H1 (cell line): ENCODE measurements at regions of chr12 and their contacts with region 1.

Region 1: DNA sequence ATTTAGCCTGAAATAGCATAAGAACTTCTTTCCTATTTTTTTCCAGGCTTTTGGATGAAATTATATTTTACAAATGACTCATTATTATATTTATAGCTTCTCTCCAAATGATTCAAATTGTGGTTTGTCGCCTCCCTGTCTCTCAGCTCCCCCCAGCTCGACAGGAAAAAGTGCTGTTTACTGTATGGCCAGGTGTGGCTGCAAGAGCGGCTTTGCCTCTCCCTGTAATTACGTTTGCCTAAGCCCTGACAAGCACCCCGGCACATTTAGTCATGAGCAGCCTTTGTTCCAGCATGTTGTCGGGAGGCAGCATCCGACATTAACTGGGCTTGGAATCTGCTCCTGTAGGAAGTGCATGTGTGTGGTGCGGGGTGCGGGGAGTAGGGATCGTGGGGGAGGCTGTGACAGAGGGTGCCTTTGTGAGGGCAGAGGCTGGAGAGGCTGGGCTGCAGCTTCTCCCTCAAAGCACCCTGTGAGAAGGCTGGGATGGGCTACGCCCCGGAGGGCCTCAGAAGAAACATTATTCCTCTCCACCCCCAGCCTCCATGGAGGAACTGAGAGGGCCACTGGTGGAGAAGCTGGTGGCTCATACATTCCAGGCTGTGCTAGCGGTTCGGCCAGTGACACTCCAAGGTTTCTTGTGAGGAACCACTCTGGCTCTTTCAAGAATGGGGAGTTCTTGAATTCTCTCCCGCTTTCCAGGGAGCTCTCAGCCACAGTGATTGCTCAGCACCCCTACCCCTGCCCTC is 42.1 kb upstream of the CTDSP2 start:
- DNase-seq: no peak
- H3K4me3 ChIP-seq: peak overlapping the region in 3 of 4 experiments; percentile 4 to 23 (median 19); a peak in 3 of 8 replicates
- H3K27ac ChIP-seq: peak overlapping the region; percentile 4; the same call in 1 of the 2 replicates
- H3K4me1 ChIP-seq: peaks cover 2 to 22% (median 17%) of the 10 kb centered on the region in 4 experiments
- H3K27me3 ChIP-seq: no peaks in the 10 kb centered on the region; a peak in 1 of 7 replicates
- CTCF ChIP-seq: no peak
- EP300 ChIP-seq: no peak
- POLR2A ChIP-seq: peak in 1 of 2 experiments; percentile 59; a peak in 2 of 3 replicates
- RAD21 ChIP-seq: no peak

Region 2: DNA sequence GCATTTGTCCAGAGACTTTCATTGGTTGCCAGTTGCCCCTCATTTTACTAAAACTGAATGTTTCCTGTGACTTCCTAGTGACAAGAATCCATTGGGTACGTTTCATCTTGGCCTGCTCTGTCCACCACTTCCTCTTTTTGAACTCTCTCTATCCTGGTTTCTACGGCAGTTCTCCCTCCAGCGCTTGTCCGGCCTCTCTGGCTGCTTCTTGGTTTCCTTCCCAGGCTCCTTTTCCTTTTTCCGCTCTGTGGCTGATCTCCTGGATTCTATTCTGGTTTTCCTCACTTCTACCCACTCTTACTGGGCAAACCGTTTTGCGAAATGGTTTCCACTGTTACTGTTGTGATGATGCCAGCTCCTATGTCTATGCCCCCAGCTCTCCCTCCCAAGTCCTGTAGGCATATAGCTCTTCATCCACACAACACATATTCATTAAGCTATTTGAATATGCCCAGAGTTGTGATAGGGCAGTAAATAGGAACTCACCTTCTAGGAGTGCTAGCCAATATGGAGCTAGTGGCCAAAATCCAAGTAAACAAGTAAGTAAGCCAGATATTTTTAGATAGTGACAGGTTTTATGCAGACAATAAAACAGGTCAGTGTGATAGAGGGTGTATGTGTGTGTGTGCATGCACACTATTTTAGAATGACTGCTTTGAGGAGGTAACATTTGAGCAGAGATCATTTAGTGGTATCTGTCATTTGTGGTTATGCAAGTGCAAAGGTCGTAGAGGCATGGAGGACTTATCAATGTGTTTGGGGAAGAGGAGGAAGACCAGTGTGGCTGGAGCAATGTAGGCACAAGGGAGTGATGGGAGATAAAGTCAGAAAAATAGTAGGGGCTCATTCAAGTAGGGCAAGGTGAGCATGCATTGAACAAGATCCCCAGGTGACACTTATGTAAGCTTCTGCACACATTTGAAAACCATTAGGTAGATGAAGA is 14.1 kb before region 1 on chr12:
- CTCF ChIA-PET with region 1: interaction called, 26 read pairs
- POLR2A ChIA-PET with region 1: interaction called, 8 read pairs
- DNase-seq: no peak
- H3K4me3 ChIP-seq: no peak overlapping the region
- H3K27ac ChIP-seq: no peak overlapping the region
- H3K4me1 ChIP-seq: no peaks in the 10 kb centered on the region; a peak in 1 of 7 replicates
- H3K27me3 ChIP-seq: no peaks in the 10 kb centered on the region
- CTCF ChIP-seq: no peak
- EP300 ChIP-seq: no peak
- POLR2A ChIP-seq: no peak
- RAD21 ChIP-seq: no peak

Region 3: GRCh38 chr12:57993025-57993424 is 104.4 kb after region 1 on chr12:
- CTCF ChIA-PET with region 1: no interaction called
- POLR2A ChIA-PET with region 1: no interaction called
- DNase-seq: no peak
- H3K4me3 ChIP-seq: no peak overlapping the region
- H3K27ac ChIP-seq: no peak overlapping the region
- H3K4me1 ChIP-seq: no peaks in the 10 kb centered on the region
- H3K27me3 ChIP-seq: no peaks in the 10 kb centered on the region
- CTCF ChIP-seq: no peak
- EP300 ChIP-seq: no peak
- POLR2A ChIP-seq: no peak
- RAD21 ChIP-seq: peak; percentile 36 to 44